ENCODE measurements at regions of chr3 and their contacts with region 1.

Region 1: DNA sequence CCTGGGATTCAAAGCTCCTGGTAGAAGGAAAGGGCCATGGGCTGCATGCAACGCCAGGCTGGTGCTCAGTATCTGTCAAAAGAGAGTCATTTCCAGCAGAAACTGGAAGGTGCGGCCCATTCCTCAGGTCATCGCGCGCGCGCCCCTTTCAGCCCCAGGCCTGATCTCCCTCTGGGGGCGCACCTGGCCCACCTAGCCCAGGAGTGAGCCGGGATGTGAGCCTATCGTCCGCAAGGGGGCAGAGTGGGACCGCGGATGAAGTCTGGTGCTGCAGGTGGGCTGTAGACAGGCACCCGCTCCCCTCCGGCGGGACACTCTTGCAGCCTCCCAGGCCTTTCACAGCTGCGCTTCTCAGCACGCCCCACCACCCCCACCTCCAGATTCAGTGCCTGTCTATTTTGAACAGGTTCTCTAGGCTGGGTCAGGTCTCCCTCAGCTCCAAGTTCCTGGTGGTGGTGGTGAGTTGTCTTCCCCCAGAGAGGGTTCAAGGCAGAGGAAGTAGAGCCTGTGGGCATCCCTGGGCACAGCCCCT is 5.8 kb upstream of the RPL29 start:
- DNase-seq: peak; percentile 95
- CTCF ChIP-seq: peak; percentile 91

Region 2: GRCh38 chr3:51967384-51968169 is 33.9 kb before region 1 on chr3 and contains the start of gene PCBP4:
- in situ Hi-C with region 1: no loop called
- DNase-seq: peak; percentile 77
- CTCF ChIP-seq: no peak

Region 3: GRCh38 chr3:52144034-52144795 is 142.7 kb after region 1 on chr3:
- in situ Hi-C with region 1: loop called (anchors 5 kb)
- DNase-seq: peak; percentile 90
- CTCF ChIP-seq: peak; percentile 92

Region 4: GRCh38 chr3:52633786-52634185 is 632.3 kb after region 1 on chr3:
- in situ Hi-C with region 1: no loop called
- DNase-seq: no peak
- CTCF ChIP-seq: no peak